ENCODE measurements at regions of chr15 and their contacts with region 1.

Region 1: DNA sequence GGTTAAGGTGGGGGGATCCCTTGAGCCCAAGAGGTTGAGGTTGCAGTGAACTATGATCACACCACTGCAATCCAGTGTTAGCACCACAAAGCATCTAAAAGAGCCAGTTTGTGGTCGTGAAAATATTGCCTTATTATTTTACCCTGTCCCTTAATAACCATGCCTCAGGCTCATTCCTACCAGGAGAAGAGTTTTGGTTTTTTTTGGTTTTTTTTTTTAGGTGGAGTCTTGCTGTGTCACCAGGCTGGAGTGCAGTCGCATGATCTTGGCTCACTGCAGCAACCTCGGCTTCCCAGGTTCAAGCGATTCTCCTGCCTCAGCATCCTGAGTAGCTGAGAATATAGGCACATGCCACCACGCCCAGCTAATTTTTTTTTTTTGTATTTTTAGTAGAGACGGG is 17.9 kb upstream of the AVEN start:
- DNase-seq: no peak
- H3K4me3 ChIP-seq: no peak overlapping the region
- H3K27ac ChIP-seq: no peak overlapping the region
- H3K4me1 ChIP-seq: no peaks in the 10 kb centered on the region
- H3K27me3 ChIP-seq: no peaks in the 10 kb centered on the region
- CTCF ChIP-seq: no peak

Region 2: DNA sequence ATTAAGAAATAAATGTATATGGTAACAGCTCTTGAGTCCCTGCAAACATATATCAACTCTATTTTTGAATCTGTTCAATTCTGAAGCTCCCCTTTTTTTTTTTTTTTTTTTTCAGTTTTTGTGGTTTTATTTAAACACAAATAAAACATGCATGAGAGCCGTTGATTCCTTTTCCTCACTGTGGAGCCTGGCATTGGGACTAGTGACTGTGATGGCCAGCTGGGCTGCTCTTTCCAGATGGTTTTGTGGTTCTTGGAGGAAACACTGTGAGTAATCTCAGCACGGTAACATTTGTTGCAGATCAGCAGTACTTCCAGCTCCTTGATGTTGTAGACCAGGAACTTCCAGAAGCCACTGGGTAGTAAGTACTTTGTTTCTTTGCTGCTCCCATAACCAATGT is 28.8 kb after region 1 on chr15:
- CTCF ChIA-PET with region 1: no interaction called
- POLR2A ChIA-PET with region 1: interaction called, 14 read pairs
- intact Hi-C with region 1: no loop called
- DNase-seq: no peak
- H3K4me3 ChIP-seq: no peak overlapping the region
- H3K27ac ChIP-seq: no peak overlapping the region
- H3K4me1 ChIP-seq: no peaks in the 10 kb centered on the region
- H3K27me3 ChIP-seq: no peaks in the 10 kb centered on the region
- CTCF ChIP-seq: no peak

Region 3: DNA sequence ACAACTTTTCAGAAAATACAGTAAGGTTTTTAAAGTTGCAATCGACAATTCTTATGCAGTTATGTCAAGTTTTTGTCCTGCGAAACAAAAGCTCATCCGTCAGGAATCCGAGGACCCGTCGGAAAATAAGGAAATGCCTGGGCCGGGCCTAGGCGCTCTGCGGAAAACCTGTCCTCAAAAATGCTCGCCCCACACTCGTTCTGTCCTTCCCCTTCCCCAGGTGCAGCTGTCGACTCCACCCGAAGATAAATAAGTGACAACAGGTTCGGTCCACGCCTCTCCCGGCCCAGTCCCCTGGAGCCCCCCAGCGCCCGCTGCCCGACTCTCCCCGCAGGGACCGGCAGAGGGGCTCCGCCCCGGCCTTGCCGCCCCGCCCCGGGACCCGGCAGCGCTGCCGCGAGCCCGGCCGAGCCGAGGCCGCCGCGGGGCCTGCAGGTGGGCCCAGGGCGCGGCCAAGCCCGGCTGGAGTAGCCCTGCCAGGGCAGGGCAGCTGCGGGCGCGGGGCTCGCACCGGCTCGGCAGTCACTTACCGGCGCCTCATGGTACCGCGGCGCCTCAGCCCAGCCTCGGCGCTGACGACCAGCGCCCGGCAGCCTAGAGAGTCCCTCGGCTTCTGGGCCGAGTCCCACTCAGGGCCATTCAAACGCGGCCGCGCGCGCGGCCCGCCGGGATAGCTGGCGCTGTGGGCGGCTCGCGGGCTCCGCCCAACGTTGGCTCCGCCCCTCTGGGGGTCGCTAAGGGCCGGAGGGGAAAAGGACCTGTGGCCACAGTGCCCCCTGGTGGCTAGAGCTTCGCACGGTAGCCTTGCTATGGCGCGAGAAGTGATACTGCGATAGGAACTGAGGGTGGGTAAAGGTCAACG is 152.7 kb after region 1 on chr15 and contains the start of gene KATNBL1:
- CTCF ChIA-PET with region 1: interaction called, 3 read pairs
- POLR2A ChIA-PET with region 1: no interaction called
- intact Hi-C with region 1: loop called (anchors 1 kb)
- DNase-seq: peak; percentile 97
- H3K4me3 ChIP-seq: peak within 1 kb of the TSS; percentile 62
- H3K27ac ChIP-seq: peak within 1 kb of the TSS; percentile 85
- H3K4me1 ChIP-seq: peaks cover 4% of the 10 kb centered on the region
- H3K27me3 ChIP-seq: no peaks in the 10 kb centered on the region
- CTCF ChIP-seq: peak; percentile 96
- total RNA-seq, gene KATNBL1: 53.2 and 55.1 TPM in 2 replicates

Region 4: GRCh38 chr15:34367101-34368081 is 310.5 kb after region 1 on chr15 and contains the start of gene LPCAT4:
- CTCF ChIA-PET with region 1: no interaction called
- POLR2A ChIA-PET with region 1: no interaction called
- intact Hi-C with region 1: loop called (anchors 1 kb)
- DNase-seq: peak; percentile 92
- H3K4me3 ChIP-seq: peak within 1 kb of the TSS; percentile 82
- H3K27ac ChIP-seq: peak within 1 kb of the TSS; percentile 96
- H3K4me1 ChIP-seq: peaks cover 8% of the 10 kb centered on the region
- H3K27me3 ChIP-seq: no peaks in the 10 kb centered on the region
- CTCF ChIP-seq: peak; percentile 98
- total RNA-seq, gene LPCAT4: 37.8 and 53.1 TPM in 2 replicates

Region 5: GRCh38 chr15:34587717-34588674 is 531.1 kb after region 1 on chr15:
- CTCF ChIA-PET with region 1: no interaction called
- POLR2A ChIA-PET with region 1: no interaction called
- intact Hi-C with region 1: loop called (anchors 2 kb)
- DNase-seq: peak; percentile 76
- H3K4me3 ChIP-seq: peak overlapping the region; percentile 1
- H3K27ac ChIP-seq: no peak overlapping the region
- H3K4me1 ChIP-seq: peaks cover 5% of the 10 kb centered on the region
- H3K27me3 ChIP-seq: no peaks in the 10 kb centered on the region
- CTCF ChIP-seq: peak; percentile 83

Region 6: GRCh38 chr15:35410774-35411173 is 1353.8 kb after region 1 on chr15:
- CTCF ChIA-PET with region 1: no interaction called
- POLR2A ChIA-PET with region 1: no interaction called
- intact Hi-C with region 1: no loop called
- DNase-seq: no peak
- H3K4me3 ChIP-seq: no peak overlapping the region
- H3K27ac ChIP-seq: no peak overlapping the region
- H3K4me1 ChIP-seq: no peaks in the 10 kb centered on the region
- H3K27me3 ChIP-seq: no peaks in the 10 kb centered on the region
- CTCF ChIP-seq: no peak